HEK293 (cell line): ENCODE measurements at regions of chr9 and their contacts with region 1.

Region 1: DNA sequence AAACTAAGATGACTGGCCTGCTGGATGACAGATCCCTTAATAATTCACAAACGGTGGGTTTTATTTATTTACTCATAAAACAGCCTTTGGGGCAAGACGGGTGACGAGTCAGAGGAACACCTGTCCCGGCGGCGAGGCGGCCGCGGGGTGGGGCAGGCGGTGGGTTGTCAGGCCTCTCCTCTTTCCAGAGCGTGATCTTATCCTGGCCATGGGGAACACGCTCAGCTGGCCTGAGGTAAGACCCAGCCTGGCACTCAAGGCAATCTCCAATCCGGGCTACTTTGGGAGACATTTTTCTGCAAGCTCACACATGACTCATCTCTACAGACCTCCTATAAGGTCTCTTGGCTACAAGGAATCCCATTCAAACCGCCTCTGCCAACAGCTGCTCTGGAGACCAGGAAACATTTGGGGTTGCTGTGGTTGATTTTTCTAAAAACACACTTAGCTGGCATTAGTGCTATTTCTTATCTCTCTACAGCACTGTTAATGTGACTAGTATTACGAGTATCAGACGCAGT is 6.3 kb downstream of the RAPGEF1 start:
- H3K4me3 ChIP-seq: no peak overlapping the region
- H3K27ac ChIP-seq: 0 out of 2 replicates have a peak overlapping the region, but pooled peaks have one; percentile 30
- H3K4me1 ChIP-seq: peaks cover 37% of the 10 kb centered on the region
- CTCF ChIP-seq: no peak

Region 2: GRCh38 chr9:131678499-131679111 is 55.0 kb before region 1 on chr9:
- CTCF ChIA-PET with region 1: interaction called, 22 read pairs
- POLR2A ChIA-PET with region 1: interaction called, 14 read pairs
- H3K4me3 ChIP-seq: no peak overlapping the region
- H3K27ac ChIP-seq: peak overlapping the region; percentile 27
- H3K4me1 ChIP-seq: peaks cover 29% of the 10 kb centered on the region
- CTCF ChIP-seq: no peak

Region 3: DNA sequence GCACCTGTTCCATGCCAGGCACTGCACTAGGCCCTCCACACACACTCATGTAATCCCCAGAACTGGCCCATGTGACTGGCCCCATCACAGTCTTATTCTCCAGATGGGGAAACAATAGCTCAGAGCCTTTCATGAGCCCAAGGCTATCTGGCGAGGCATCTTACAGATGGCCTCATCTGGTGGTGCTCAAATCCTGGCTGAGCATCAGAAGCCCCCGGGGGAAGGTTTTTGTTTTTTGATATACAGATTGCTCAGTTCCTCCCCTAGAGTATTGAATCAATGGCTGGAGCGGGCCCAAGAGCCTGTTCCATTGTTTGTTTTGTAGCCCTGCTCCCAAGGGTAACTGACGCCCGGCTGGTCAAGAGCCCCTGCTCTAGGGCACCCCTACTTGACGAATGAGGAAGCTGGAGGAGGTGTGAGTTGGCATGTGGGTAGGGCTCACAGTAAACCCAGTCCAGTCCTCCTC is 151.6 kb after region 1 on chr9:
- CTCF ChIA-PET with region 1: no interaction called
- POLR2A ChIA-PET with region 1: no interaction called
- H3K4me3 ChIP-seq: no peak overlapping the region
- H3K27ac ChIP-seq: no peak overlapping the region
- H3K4me1 ChIP-seq: no peaks in the 10 kb centered on the region
- CTCF ChIP-seq: no peak